IMR-90 (cell line): ENCODE measurements at regions of chr13 and their contacts with region 1.

Region 1: GRCh38 chr13:36981156-36981743 is 17.9 kb downstream of the ALG5 start:
- DNase-seq: peak; percentile 79
- ATAC-seq: peak; percentile 56
- H3K4me3 ChIP-seq: no peak overlapping the region
- H3K27ac ChIP-seq: no peak overlapping the region
- H3K4me1 ChIP-seq: peaks cover 9% of the 10 kb centered on the region
- H3K27me3 ChIP-seq: no peaks in the 10 kb centered on the region
- CTCF ChIP-seq: peak; percentile 81
- POLR2A ChIP-seq: no peak
- RAD21 ChIP-seq: peak; percentile 76

Region 2: DNA sequence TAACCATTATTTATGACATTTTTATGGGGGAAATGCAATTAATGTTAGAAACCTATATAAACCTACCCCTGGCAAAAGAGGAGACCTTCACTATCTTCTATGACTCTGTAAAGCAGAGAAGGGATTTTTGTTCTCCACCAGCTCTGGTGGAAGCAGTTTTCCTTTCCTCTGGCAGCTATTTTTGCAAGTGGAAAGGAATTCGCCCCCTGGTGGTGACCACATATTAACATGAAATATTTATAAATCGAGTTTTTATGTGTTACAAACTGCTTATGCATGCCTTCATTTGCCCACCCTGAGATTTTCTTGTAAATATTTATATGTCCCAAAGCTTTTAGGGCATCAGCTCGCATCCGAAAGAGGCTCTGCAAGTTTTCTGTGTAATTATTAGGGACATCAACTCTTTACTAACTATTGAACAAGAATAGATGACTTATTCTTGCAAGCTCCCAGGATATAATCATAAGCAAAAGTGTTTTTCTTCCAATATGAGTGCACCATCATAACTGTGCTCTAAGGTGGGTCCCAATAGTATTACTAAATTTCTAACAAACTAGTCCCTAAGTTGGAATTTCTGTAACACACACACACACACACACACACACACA is 245.0 kb before region 1 on chr13:
- CTCF ChIA-PET with region 1: no interaction called
- POLR2A ChIA-PET with region 1: no interaction called
- dilution Hi-C with region 1: no loop called
- in situ Hi-C with region 1: no loop called
- intact Hi-C with region 1: loop called (anchors 5 kb)
- DNase-seq: peak; percentile 62
- ATAC-seq: peak; percentile 74
- H3K4me3 ChIP-seq: no peak overlapping the region
- H3K27ac ChIP-seq: no peak overlapping the region
- H3K4me1 ChIP-seq: no peaks in the 10 kb centered on the region
- H3K27me3 ChIP-seq: peaks cover 2% of the 10 kb centered on the region; the same call in 1 of the 2 replicates
- CTCF ChIP-seq: peak; percentile 64
- POLR2A ChIP-seq: no peak
- RAD21 ChIP-seq: peak; percentile 60

Region 3: DNA sequence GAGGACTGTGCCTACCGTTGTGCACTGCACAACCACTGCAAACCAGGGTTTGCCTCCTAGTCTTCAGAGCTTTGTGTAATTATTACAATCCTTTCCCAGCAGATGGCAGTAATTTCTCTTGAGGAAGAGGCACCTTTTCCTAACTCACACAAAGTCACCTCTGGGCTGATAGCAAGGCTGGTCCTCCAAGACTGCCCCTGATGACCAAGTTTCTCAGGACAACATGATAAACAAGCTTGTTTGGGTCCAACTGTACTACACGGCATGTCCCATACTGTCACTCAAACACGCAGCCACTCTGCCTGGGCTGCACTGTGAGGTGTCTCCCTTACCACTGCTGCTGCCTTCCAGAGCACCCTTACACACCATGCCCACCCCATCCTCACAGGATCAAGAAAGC is 123.0 kb before region 1 on chr13:
- CTCF ChIA-PET with region 1: interaction called, 20 read pairs
- POLR2A ChIA-PET with region 1: interaction called, 5 read pairs
- dilution Hi-C with region 1: loop called (anchors 25 kb)
- in situ Hi-C with region 1: loop called (anchors 5 kb)
- intact Hi-C with region 1: loop called (anchors 1 kb)
- DNase-seq: peak; percentile 65
- ATAC-seq: peak; percentile 94
- H3K4me3 ChIP-seq: no peak overlapping the region
- H3K27ac ChIP-seq: no peak overlapping the region
- H3K4me1 ChIP-seq: no peaks in the 10 kb centered on the region; the same call in 1 of the 2 replicates
- H3K27me3 ChIP-seq: no peaks in the 10 kb centered on the region
- CTCF ChIP-seq: peak; percentile 61
- POLR2A ChIP-seq: no peak
- RAD21 ChIP-seq: peak; percentile 70